Natural killer cell (primary cell): ENCODE measurements at regions of chr2 and their contacts with region 1.

Region 1: GRCh38 chr2:76973610-76974009 is 548.6 kb downstream of the LRRTM4 start:
- DNase-seq: no peak
- ATAC-seq: no peak
- H3K4me3 ChIP-seq: no peak overlapping the region
- H3K4me3 Mint-ChIP-seq: no peak overlapping the region
- H3K27ac ChIP-seq: no peak overlapping the region
- H3K27ac Mint-ChIP-seq: no peak overlapping the region
- H3K4me1 ChIP-seq: no peaks in the 10 kb centered on the region
- H3K4me1 Mint-ChIP-seq: no peaks in the 10 kb centered on the region
- H3K27me3 ChIP-seq: no peaks in the 10 kb centered on the region
- H3K27me3 Mint-ChIP-seq: no peaks in the 10 kb centered on the region
- CTCF ChIP-seq: no peak

Region 2: DNA sequence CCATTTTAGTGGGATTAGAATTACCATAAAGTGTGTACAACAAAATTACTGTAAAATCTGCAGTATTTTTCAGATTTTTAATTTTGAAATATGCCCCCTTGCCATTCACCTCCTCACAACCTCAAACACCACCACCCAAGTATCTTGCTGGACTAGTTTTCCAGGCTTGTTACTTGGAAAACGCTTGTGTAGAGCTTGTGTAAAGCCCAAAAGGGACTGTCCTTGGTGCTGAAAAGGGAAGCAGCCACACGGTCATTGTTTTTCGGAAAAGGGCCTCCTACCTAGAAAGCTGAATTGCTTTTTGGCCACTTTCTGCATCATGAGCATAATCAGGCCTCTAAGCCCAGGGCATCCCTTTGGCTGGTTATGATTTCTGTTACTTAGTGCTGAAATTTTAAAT is 14.9 kb before region 1 on chr2:
- intact Hi-C with region 1: loop called (anchors 1 kb)
- DNase-seq: no peak
- ATAC-seq: no peak
- H3K4me3 ChIP-seq: no peak overlapping the region
- H3K4me3 Mint-ChIP-seq: no peak overlapping the region
- H3K27ac ChIP-seq: no peak overlapping the region
- H3K27ac Mint-ChIP-seq: no peak overlapping the region
- H3K4me1 ChIP-seq: no peaks in the 10 kb centered on the region
- H3K4me1 Mint-ChIP-seq: no peaks in the 10 kb centered on the region
- H3K27me3 ChIP-seq: no peaks in the 10 kb centered on the region
- H3K27me3 Mint-ChIP-seq: no peaks in the 10 kb centered on the region
- CTCF ChIP-seq: no peak

Region 3: GRCh38 chr2:77034445-77034844 is 60.8 kb after region 1 on chr2:
- intact Hi-C with region 1: no loop called
- DNase-seq: no peak
- ATAC-seq: no peak
- H3K4me3 ChIP-seq: no peak overlapping the region
- H3K4me3 Mint-ChIP-seq: no peak overlapping the region
- H3K27ac ChIP-seq: no peak overlapping the region
- H3K27ac Mint-ChIP-seq: no peak overlapping the region
- H3K4me1 ChIP-seq: no peaks in the 10 kb centered on the region
- H3K4me1 Mint-ChIP-seq: no peaks in the 10 kb centered on the region
- H3K27me3 ChIP-seq: no peaks in the 10 kb centered on the region
- H3K27me3 Mint-ChIP-seq: no peaks in the 10 kb centered on the region
- CTCF ChIP-seq: no peak